ENCODE measurements at regions of chr19 and their contacts with region 1.

Region 1: GRCh38 chr19:12796146-12797071 is 5.1 kb downstream of the JUNB start:
- DNase-seq: peak; percentile 84
- ATAC-seq: no peak
- H3K4me3 Mint-ChIP-seq: peak overlapping the region; percentile 63
- H3K27ac Mint-ChIP-seq: peak overlapping the region; percentile 82
- H3K4me1 Mint-ChIP-seq: peaks cover 39% of the 10 kb centered on the region
- H3K27me3 Mint-ChIP-seq: no peaks in the 10 kb centered on the region

Region 2: DNA sequence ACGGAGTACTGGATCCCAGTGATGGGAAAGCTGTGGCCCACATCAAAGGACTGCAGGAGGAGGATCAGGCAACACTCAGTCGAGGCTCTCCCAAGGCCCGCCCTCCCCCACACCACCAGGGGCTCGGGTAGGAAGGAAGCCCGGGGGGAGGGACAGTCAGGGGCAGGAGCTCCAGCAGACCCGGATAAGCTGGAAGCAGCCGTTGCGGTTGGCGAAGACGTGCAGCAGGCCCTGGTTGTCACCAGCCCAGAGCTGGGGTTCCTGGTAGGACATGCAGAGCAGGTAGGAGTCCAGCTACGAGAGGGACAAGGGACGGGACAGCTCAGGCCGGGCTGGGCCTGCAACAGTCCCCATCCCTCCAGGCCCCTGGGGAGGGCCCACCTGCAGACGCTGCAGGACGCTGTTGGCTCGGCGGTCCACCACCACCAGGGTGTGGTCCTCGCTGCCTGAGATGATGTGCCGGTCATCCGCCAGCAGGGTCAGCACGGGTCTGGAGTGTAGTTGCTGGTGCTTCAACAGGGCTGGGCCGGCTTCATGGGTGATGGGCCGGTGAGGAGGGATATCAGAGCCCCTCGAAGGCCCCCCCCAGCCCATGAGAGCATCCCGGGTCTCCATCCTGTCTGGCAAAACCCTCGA is 106.7 kb before region 1 on chr19:
- CTCF ChIA-PET with region 1: no interaction called
- POLR2A ChIA-PET with region 1: no interaction called
- DNase-seq: no peak
- ATAC-seq: no peak
- H3K4me3 Mint-ChIP-seq: no peak overlapping the region
- H3K27ac Mint-ChIP-seq: no peak overlapping the region
- H3K4me1 Mint-ChIP-seq: peaks cover 6% of the 10 kb centered on the region
- H3K27me3 Mint-ChIP-seq: no peaks in the 10 kb centered on the region

Region 3: DNA sequence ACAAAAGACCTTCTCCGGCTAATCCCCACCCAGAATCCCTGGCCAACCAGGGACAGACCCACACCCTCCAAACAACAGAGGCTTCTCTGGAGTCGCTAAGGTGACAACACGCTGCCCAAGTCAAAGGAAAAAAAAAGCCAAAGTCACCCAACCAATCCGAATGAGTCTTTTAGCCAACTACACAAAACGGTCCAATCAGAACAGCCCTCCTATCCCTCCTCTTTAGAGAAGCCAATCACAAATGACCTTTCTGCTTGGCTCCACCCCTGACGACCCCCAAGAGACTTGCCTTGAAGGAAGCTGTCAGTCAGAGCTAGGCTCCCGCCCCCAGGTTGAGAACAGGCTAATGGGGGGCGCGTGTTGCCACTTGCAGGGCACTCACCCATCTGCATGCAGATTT is 93.4 kb before region 1 on chr19:
- CTCF ChIA-PET with region 1: no interaction called
- POLR2A ChIA-PET with region 1: no interaction called
- DNase-seq: peak; percentile 49
- ATAC-seq: peak; percentile 54
- H3K4me3 Mint-ChIP-seq: no peak overlapping the region
- H3K27ac Mint-ChIP-seq: no peak overlapping the region
- H3K4me1 Mint-ChIP-seq: peaks cover 2% of the 10 kb centered on the region
- H3K27me3 Mint-ChIP-seq: no peaks in the 10 kb centered on the region

Region 4: DNA sequence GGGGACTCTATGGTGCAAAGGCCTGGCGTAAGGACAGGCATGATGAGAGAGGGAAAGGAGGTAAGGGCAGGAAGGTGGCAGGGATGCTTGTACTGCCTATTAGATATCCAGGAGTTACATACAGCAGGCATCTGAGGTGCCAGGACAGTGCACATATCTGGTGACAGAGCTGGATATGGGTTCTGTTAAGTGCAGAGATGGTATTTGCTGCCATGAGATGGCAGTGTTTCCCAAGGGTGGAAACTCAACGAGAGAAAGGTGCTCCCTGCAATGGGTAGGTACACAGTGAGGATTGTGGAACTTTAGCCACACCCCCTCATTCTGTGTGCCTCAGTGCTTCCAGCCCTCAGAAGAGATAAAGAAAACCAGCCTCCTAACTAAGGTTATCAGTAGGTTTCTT is 79.5 kb before region 1 on chr19:
- CTCF ChIA-PET with region 1: interaction called, 15 read pairs
- POLR2A ChIA-PET with region 1: interaction called, 20 read pairs
- DNase-seq: peak; percentile 62
- ATAC-seq: peak; percentile 63
- H3K4me3 Mint-ChIP-seq: no peak overlapping the region
- H3K27ac Mint-ChIP-seq: peak overlapping the region; percentile 17
- H3K4me1 Mint-ChIP-seq: peaks cover 20% of the 10 kb centered on the region
- H3K27me3 Mint-ChIP-seq: no peaks in the 10 kb centered on the region

Region 5: DNA sequence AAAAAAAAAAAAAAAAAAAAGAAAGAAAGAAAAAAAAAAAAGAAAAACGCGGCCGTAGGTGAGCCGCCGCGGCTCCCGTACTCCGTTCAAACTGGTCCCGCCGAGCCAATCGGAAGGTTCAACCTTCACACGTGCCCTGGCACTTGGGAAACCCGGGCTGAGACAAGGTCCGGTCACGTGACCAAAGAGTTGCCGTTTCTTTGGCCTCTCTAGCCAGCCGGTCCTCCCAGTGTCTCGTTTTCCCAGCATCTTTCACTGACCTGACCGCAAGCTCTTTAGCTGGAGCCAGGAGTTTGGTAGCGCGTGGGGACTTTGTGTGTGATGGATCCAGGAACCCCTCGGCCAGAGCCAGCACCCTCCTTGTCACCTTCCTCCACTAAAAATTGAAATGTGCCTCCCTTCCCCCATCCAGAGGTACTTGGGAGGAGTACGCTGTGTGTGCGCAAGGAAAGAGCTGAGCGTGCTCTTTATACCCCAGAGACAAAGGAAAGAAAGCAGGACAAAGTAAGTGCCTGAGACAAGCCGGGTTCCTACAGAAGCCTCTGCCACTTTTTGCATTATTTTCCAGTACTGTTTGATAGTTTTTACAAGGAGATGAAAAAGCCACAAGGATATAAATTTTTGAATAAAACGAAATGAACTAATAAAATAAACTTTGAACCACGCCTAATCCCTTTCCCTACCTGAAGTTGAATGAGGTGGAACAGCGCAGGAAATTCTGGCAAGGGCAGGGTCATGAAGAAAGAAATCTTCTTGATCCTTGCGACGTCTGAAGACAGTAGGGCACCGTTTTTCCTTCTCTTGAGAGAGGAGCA is 73.6 kb before region 1 on chr19:
- CTCF ChIA-PET with region 1: interaction called, 15 read pairs
- POLR2A ChIA-PET with region 1: interaction called, 20 read pairs
- DNase-seq: peak; percentile 98
- ATAC-seq: peak; percentile 91
- H3K4me3 Mint-ChIP-seq: peak overlapping the region; percentile 85
- H3K27ac Mint-ChIP-seq: peak overlapping the region; percentile 86
- H3K4me1 Mint-ChIP-seq: peaks cover 29% of the 10 kb centered on the region
- H3K27me3 Mint-ChIP-seq: no peaks in the 10 kb centered on the region

Region 6: DNA sequence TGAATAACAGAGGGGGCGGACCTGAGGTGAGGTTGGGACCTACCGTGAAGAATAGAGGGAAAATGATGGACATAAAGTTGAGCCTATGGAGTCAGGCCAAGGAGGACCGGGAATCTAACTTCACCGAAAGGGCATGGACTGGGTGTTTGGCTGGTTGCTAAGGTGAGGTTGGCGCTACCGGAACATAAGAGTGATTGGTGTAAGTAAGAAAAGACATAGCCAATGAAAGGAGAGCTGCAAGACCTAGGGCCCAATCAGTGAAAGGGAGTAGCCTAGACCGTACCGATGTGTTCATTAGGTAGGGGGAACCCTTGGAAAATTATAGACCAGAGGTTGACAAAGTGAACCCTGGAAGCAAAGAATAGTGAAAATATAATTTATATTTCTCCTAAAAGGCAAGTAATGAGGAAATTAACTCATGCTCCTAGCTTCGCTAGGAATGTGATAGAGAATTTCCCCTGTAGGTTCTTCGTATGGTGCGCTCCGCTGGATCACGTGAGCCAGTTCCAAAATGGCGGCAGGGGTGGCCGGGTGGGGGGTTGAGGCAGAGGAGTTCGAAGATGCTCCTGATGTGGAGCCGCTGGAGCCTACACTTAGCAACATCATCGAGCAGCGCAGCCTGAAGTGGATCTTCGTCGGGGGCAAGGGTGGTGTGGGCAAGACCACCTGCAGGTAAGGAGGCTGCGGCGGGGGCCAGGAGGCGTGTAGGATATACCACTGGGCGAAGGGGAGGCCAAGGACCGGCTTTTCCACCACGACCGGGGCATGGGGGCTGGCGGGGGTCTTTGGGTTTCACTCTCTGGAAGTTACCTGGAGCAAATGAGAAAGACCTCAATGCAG is 59.2 kb before region 1 on chr19 and contains the start of gene GET3:
- CTCF ChIA-PET with region 1: interaction called, 16 read pairs
- POLR2A ChIA-PET with region 1: interaction called, 24 read pairs
- DNase-seq: peak; percentile 89
- ATAC-seq: peak; percentile 85
- H3K4me3 Mint-ChIP-seq: peak within 1 kb of the TSS; percentile 100
- H3K27ac Mint-ChIP-seq: peak within 1 kb of the TSS; percentile 98
- H3K4me1 Mint-ChIP-seq: peaks cover 43% of the 10 kb centered on the region
- H3K27me3 Mint-ChIP-seq: no peaks in the 10 kb centered on the region
- total RNA-seq, gene GET3: 66.8 to 71.5 TPM

Region 7: GRCh38 chr19:12782229-12783028 is 14.0 kb before region 1 on chr19:
- CTCF ChIA-PET with region 1: interaction called, 390 read pairs
- POLR2A ChIA-PET with region 1: interaction called, 380 read pairs
- DNase-seq: peak; percentile 87
- ATAC-seq: peak; percentile 51
- H3K4me3 Mint-ChIP-seq: peak overlapping the region; percentile 82
- H3K27ac Mint-ChIP-seq: peak overlapping the region; percentile 98
- H3K4me1 Mint-ChIP-seq: peaks cover 43% of the 10 kb centered on the region
- H3K27me3 Mint-ChIP-seq: no peaks in the 10 kb centered on the region

Region 8: DNA sequence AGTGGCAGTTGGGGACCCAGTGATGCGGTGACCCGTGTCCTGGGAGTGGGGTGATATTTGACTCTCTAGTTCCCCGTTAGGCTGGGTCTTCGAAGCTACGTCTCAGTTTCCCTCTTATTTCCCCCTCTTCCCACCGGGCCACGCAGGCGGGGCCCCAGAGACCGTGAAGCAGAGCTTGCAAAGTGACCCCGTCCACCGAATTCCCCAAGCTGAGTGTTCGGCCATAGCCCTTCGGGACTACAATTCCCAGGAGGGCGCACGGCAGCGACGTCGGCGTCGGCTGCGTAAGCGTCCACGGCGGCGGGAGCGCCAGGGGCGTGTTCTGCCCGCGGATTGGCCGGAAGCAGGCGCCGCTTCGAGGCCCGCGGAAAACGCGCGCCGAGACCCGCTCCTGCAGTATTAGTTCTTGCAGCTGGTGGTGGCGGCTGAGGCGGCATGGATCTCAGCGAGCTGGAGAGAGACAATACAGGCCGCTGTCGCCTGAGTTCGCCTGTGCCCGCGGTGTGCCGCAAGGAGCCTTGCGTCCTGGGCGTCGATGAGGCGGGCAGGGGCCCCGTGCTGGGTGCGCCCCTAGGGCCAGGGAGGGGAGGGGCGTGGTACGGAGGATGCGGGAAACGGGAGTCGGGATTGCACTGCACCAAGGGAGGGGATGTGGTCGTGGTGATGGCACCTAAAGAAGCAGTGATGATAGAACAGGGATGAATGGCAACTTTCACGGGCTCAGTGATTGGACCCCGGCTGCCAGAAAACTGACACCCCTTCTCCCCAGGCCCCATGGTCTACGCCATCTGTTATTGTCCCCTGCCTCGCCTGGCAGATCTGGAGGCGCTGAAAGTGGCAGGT is 10.1 kb after region 1 on chr19 and contains the start of gene RNASEH2A:
- CTCF ChIA-PET with region 1: interaction called, 15 read pairs
- POLR2A ChIA-PET with region 1: interaction called, 34 read pairs
- DNase-seq: peak; percentile 92
- ATAC-seq: peak; percentile 89
- H3K4me3 Mint-ChIP-seq: peak within 1 kb of the TSS; percentile 97
- H3K27ac Mint-ChIP-seq: peak within 1 kb of the TSS; percentile 95
- H3K4me1 Mint-ChIP-seq: peaks cover 28% of the 10 kb centered on the region
- H3K27me3 Mint-ChIP-seq: no peaks in the 10 kb centered on the region
- total RNA-seq, gene RNASEH2A: 49.2 to 64.0 TPM

Measured in activated CD8-positive, alpha-beta T cell treated with anti-CD3 and anti-CD28 coated beads, Interleukin-2, amount 10 ng/mL, durations not matched to agents 7 days and 5 days (primary cell).